Mucosa of descending colon (tissue), 3 donors: ENCODE measurements at regions of chr2 and their contacts with region 1.

Region 1: DNA sequence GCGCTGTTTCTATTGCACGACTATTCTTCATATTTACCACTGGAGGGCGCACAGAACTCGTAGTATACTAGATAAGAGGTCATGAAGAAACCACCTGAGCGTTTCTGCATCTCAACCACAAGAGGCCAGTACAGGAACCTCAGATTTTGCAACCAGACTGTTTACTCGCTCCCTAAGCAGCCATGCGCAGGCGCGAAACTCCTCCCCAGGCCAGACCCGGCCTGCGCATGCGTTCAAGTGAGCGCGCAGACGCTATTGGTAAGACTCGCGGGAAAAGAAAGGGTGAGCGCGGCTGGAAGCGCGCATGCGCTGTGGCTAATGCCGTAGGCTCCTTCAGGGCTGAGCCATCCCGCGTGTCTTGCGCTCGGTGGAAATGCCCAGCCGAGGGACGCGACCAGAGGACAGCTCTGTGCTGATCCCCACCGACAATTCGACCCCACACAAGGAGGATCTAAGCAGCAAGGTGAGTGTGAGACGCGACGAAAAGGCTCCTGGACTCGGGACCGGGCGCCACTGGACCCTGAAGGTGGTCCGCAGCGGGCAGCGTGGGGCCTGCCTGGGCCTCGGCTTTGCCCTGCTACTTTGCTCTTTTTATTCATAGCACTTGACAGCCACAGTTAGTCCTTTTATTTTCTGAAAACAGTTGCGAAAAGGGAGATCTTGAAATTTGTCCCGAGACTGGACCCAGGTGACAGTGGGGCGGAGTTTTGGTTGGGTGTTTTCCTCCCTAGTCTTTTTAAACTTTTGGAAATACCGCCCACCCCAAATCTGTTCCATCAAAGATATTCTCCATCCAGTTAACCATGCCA is at the start of gene ASNSD1:
- DNase-seq: peak; percentile 98 to 99 (median 99)
- ATAC-seq: peak; percentile 98
- H3K4me3 ChIP-seq: peak within 1 kb of the TSS; percentile 73
- H3K4me1 ChIP-seq: peaks cover 7% of the 10 kb centered on the region
- CTCF ChIP-seq: peak; percentile 86
- total RNA-seq, gene ASNSD1: 19.0 to 40.2 (median 19.1) TPM

Region 2: DNA sequence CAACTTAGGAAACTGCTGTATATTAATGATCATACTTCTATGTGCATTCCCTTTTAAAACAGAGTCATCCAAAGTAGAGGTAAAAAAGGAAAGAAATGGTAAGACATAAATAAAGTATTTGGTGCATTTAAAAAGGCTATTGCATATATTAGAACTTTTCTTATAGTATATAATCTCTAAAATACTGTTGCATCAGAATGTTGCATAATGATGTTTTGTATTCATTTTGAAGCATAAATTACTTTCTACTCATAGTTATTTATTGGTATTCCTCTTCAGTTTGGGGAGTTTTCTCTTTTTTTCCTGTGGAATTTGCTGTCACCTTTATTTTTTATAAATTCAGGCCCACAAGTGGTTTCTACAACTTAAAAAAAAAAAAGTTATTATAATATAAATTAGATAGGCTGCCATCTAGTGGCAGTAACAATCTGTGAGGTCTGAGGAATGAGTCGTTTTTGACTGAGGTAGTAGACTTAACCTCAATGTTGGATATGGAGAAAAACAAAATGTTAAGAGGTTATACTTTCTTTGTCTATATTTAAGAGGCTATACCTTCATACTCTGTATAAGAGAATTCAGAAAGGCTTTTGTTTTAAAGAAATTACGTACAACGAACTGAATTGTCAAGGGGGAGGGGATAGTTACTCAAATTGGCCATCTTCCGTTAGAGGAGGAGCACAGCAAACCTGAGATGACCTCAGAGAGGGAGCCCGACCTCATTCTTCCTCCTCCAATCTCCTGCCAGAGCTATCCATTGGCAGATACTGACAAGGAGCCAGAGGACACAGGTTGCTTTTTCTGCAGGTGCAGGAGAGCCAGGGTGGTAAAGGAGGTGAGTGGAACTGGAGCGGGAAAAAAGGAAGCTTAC is 36.9 kb after region 1 on chr2:
- intact Hi-C with region 1: loop called in 1 of 2 experiments (anchors 5 kb)
- DNase-seq: peak in 1 of 3 donors; percentile 87
- ATAC-seq: peak; percentile 85
- H3K4me3 ChIP-seq: no peak overlapping the region
- H3K4me1 ChIP-seq: peaks cover 4% of the 10 kb centered on the region
- CTCF ChIP-seq: no peak

Region 3: GRCh38 chr2:189762551-189763298 is 101.4 kb after region 1 on chr2 and contains the start of gene OSGEPL1:
- intact Hi-C with region 1: loop called in 1 of 2 experiments (anchors 10 kb)
- DNase-seq: peak; percentile 93 to 96 (median 96)
- ATAC-seq: peak; percentile 98
- H3K4me3 ChIP-seq: peak within 1 kb of the TSS; percentile 46
- H3K4me1 ChIP-seq: peaks cover 4% of the 10 kb centered on the region
- CTCF ChIP-seq: no peak
- total RNA-seq, gene OSGEPL1: 3.9 to 5.1 (median 4.3) TPM

Region 4: GRCh38 chr2:189821953-189822748 is 160.8 kb after region 1 on chr2:
- intact Hi-C with region 1: no loop called
- DNase-seq: no peak
- ATAC-seq: no peak
- H3K4me3 ChIP-seq: no peak overlapping the region
- H3K4me1 ChIP-seq: no peaks in the 10 kb centered on the region
- CTCF ChIP-seq: no peak